Stomach (tissue), 19 donors: ENCODE measurements at regions of chr5 and their contacts with region 1.

Region 1: GRCh38 chr5:19874811-19875210 is 113.2 kb downstream of the CDH18 start:
- DNase-seq: no peak
- H3K4me3 ChIP-seq: no peak overlapping the region
- H3K27ac ChIP-seq: no peak overlapping the region
- H3K4me1 ChIP-seq: no peaks in the 10 kb centered on the region
- H3K27me3 ChIP-seq: no peaks in the 10 kb centered on the region
- CTCF ChIP-seq: no peak
- EP300 ChIP-seq: no peak
- POLR2A ChIP-seq: no peak

Region 2: GRCh38 chr5:20105915-20106314 is 231.1 kb after region 1 on chr5:
- intact Hi-C with region 1: no loop called
- DNase-seq: no peak
- H3K4me3 ChIP-seq: no peak overlapping the region
- H3K27ac ChIP-seq: no peak overlapping the region
- H3K4me1 ChIP-seq: no peaks in the 10 kb centered on the region
- H3K27me3 ChIP-seq: no peaks in the 10 kb centered on the region
- CTCF ChIP-seq: no peak
- EP300 ChIP-seq: no peak
- POLR2A ChIP-seq: no peak

Region 3: GRCh38 chr5:20680718-20681302 is 806.0 kb after region 1 on chr5:
- intact Hi-C with region 1: loop called (anchors 10 kb)
- DNase-seq: no peak
- H3K4me3 ChIP-seq: no peak overlapping the region
- H3K27ac ChIP-seq: no peak overlapping the region
- H3K4me1 ChIP-seq: no peaks in the 10 kb centered on the region
- H3K27me3 ChIP-seq: no peaks in the 10 kb centered on the region
- CTCF ChIP-seq: no peak
- EP300 ChIP-seq: no peak
- POLR2A ChIP-seq: no peak